Right ventricle myocardium inferior (tissue), 1 donor: ENCODE measurements at regions of chr2 and their contacts with region 1.

Region 1: DNA sequence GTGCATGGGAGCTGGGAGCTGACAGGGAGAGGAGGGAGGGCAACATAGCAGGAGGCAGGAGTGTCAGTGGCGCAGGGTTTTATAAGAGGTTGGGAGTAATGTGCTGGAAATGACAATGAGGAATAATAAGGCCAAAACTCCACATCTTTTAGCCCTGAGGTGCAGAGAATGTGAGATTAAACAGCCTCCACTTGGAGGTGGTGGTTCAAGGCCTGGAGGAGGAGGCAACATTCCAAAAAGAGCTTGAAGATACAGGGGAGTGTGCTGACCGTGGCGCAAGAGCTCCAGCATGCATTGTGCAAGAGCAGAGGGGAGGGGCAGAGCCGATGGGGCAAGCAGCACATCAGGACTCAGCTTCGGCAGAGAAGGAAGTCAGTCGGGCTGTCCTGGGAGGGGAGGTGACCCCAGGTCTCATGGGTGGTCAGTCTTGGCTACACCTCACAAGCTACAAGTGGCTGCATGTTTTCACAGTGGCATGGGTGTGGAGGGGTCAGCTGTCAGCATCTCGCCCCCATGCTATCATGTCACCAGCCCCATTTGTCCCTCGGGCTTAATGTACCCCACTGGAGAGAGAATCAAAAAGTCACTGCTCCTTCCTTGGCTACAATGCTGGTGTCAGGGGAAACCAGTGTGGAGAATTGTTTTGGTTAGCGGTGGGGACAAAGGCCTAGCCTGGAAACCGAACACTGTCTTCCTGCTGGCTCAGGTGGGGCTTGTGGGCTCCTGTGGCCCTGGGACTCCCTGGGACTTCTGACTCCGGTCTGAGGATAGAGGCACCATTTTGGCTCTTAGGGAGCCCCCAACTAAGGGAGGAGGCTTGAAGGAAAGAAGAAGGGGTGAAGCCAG is 208.0 kb downstream of the ZFP36L2 start:
- DNase-seq: peak; percentile 95
- ATAC-seq: peak; percentile 96

Region 2: DNA sequence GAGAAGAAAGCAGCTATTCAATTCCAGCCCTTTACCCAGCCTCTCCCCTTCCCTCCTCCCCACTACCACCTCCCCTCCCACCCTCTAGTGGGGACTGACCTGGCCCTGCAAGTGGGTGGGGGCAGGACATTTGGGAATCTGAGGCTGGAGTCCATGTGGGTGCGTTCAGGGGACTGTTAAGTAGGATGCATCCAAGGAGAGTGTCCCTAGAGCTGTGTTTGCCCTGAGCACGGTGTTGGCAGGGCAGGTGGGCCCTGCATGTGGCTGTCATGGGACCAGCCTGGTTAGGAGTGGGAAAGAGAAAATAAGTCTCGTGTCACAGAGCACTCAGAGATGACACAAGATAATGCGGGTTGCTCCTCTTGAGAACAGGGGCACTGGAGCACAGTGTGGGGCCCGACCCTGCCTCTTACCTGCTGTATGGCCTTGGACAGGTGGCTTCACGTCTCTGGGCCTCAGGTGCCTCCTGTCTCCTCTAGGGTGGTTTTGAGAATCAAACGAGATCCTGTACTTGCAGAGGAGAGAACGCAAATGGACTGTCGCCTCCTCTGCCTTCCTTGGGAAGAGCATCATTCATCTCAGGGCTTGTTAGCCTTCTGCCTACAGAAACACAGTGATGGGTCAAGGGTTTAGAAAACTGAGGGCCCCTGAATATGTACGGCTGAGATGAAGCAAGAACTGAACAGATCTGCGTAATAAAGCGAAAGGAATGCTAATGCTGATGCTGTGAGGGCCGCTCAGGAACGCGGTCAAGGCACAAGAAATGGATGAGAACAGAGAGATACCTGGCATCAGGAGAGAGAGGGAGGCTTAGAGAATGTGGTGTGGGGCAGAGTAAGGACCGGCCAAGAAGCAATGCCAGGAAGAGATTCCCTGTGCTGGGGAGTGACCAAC is 38.3 kb before region 1 on chr2:
- intact Hi-C with region 1: loop called (anchors 5 kb)
- DNase-seq: no peak
- ATAC-seq: no peak

Region 3: GRCh38 chr2:43070039-43070438 is 51.6 kb after region 1 on chr2:
- intact Hi-C with region 1: no loop called
- DNase-seq: no peak
- ATAC-seq: no peak